HEK293 (cell line): ENCODE measurements at regions of chr6 and their contacts with region 1.

Region 1: DNA sequence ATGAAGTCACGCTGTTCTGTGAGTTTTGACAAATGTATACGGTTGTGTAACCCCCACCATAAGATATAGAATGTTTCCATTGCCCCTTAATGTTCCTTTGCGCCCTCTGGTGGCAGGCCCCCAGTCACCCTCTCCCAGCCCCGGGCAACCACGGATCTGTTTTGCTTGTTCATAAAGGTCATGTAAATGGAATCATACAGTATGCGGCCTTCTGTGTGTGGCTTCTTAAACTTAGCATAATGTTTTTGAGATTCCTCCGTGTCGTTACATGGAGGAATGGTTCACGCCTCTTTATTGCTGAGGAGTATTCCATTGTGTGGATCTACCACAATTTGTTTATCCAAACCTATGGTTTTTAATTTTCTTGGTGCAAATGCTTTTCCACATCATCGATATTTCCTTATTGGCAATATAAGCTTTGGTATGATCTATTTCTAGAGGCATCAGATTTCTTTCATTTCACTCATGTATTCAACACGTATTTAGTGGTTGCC is 28.4 kb downstream of the LYRM2 start:
- H3K4me3 ChIP-seq: no peak overlapping the region
- H3K27ac ChIP-seq: no peak overlapping the region
- H3K4me1 ChIP-seq: no peaks in the 10 kb centered on the region
- CTCF ChIP-seq: peak; percentile 47

Region 2: GRCh38 chr6:89582669-89583325 is 27.4 kb before region 1 on chr6:
- CTCF ChIA-PET with region 1: no interaction called
- POLR2A ChIA-PET with region 1: no interaction called
- H3K4me3 ChIP-seq: no peak overlapping the region
- H3K27ac ChIP-seq: no peak overlapping the region
- H3K4me1 ChIP-seq: no peaks in the 10 kb centered on the region
- CTCF ChIP-seq: no peak

Region 3: DNA sequence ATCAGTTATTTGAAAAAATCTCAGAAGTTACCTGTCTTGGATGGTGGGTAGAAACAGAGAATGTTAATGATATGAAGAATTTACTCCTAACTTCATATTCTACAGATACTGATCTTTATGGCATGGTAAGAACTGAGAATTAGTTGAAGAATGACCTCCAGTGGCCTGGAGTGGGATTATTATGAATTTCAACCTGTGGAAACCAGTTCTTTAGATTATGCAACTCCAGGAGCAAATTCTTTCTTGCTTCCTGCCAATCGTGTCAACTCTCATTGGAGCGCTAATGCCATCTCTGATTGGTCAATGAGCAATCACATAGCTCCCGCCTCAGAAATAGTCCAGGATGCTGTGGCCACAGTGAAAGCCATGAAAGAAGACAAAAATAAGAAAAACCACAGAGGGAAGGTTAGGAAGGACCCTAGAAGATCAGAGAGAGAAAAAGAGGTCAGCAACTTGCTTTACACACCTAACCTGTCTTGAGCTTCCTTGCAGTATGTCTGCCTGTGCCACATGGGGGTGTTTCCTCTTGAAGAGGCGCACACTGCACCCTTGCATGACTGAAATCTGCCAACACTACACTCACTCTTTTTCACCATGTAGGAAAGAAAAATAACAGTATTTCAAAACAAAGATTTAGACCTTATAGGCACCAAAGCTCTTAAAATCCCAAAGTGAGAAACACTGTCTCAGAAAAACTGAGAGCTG is 12.1 kb before region 1 on chr6:
- CTCF ChIA-PET with region 1: interaction called, 45 read pairs
- POLR2A ChIA-PET with region 1: no interaction called
- H3K4me3 ChIP-seq: no peak overlapping the region
- H3K27ac ChIP-seq: no peak overlapping the region
- H3K4me1 ChIP-seq: no peaks in the 10 kb centered on the region
- CTCF ChIP-seq: no peak